Sigmoid colon (tissue), 7 donors: ENCODE measurements at regions of chr16 and their contacts with region 1.

Region 1: GRCh38 chr16:55944377-55944802 is 69.2 kb upstream of the CES5A start:
- DNase-seq: peak; percentile 91
- H3K4me3 ChIP-seq: no peak overlapping the region
- H3K27ac ChIP-seq: peak overlapping the region in 2 of 4 donors; percentile 4 to 63
- H3K4me1 ChIP-seq: peaks cover 0 to 14% (median 4%) of the 10 kb centered on the region in 4 donors
- H3K27me3 ChIP-seq: no peaks in the 10 kb centered on the region
- CTCF ChIP-seq: peak; percentile 79 to 93 (median 86)
- EP300 ChIP-seq: no peak
- POLR2A ChIP-seq: no peak

Region 2: DNA sequence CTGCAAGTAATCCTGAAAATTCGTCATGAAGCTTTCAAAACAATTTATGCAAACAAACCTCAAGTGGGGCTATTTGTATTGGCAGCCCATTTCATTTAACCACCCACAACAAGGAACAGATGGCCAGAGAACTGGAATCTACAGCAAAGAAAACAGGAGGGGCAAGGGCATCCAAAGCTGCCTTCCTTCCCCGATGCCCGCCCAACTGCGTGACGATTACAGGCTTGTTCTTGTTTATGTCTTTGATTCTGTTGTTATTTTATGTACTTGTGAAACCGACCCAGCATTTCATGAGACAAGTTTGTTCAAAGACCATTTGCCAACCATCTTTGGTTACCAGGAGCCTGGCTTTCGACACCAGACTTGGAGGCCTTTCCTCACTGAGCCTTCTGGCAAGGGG is 679.4 kb before region 1 on chr16:
- intact Hi-C with region 1: no loop called
- DNase-seq: no peak
- H3K4me3 ChIP-seq: no peak overlapping the region
- H3K27ac ChIP-seq: no peak overlapping the region
- H3K4me1 ChIP-seq: no peaks in the 10 kb centered on the region
- H3K27me3 ChIP-seq: no peaks in the 10 kb centered on the region
- CTCF ChIP-seq: no peak
- EP300 ChIP-seq: no peak
- POLR2A ChIP-seq: no peak

Region 3: GRCh38 chr16:56317998-56318826 is 373.8 kb after region 1 on chr16:
- intact Hi-C with region 1: loop called (anchors 1 kb)
- DNase-seq: peak; percentile 92
- H3K4me3 ChIP-seq: peak overlapping the region; percentile 15 to 40 (median 32)
- H3K27ac ChIP-seq: peak overlapping the region in 3 of 4 donors; percentile 47 to 60 (median 47)
- H3K4me1 ChIP-seq: peaks cover 0 to 16% (median 8%) of the 10 kb centered on the region in 4 donors
- H3K27me3 ChIP-seq: no peaks in the 10 kb centered on the region
- CTCF ChIP-seq: peak; percentile 91 to 96 (median 94)
- EP300 ChIP-seq: no peak
- POLR2A ChIP-seq: no peak

Region 4: DNA sequence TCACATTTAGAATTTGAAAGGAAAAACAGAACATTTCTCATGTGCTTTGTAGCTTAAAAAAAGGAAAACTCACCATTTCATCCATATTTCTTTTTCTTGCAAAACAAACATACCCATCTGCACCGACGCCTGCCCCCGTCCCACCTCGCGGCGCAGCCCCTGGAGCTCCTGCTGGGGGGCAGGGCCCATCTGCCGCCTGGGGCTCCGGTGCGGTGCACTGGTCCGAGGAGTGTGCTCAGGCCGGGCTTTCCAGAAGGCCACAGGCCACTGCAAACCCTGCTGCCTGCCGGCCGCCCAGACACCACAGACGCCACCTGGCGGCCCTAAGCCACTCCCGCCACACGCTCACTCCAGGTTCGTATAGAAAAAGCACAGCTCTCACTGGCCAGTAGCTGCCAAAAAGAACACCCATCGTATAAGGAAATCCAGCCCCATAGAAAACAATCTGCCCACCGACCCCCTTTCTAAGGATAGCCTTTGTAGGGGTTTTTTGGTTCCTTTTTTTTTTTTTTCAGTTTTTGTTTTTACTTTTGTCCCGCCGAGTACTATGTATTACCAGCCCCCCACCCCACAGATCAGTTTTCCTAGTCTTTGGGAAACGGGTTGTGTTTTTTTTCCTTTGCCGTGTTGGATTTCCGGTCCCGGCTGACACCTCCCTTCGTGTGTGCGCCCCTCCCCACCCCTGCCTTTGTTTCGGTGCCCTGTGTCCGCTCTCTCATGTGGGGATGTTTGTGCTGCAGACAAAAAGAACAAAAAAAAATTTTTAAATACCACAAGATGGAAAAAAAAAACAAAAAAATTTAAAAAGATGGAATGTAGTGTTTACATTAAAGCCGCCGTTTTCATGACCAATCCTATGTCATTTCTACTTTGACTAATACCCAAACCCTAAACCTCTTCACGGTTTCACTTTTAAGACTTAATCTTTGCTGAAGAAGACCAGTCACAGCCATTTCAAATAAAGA is 412.2 kb after region 1 on chr16:
- intact Hi-C with region 1: loop called (anchors 2 kb)
- DNase-seq: peak; percentile 91
- H3K4me3 ChIP-seq: peak overlapping the region; percentile 31 to 54 (median 49)
- H3K27ac ChIP-seq: peak overlapping the region; percentile 62 to 75 (median 71)
- H3K4me1 ChIP-seq: peaks cover 0 to 21% (median 15%) of the 10 kb centered on the region in 4 donors
- H3K27me3 ChIP-seq: no peaks in the 10 kb centered on the region
- CTCF ChIP-seq: peak; percentile 59 to 87 (median 80)
- EP300 ChIP-seq: no peak
- POLR2A ChIP-seq: no peak

Region 5: DNA sequence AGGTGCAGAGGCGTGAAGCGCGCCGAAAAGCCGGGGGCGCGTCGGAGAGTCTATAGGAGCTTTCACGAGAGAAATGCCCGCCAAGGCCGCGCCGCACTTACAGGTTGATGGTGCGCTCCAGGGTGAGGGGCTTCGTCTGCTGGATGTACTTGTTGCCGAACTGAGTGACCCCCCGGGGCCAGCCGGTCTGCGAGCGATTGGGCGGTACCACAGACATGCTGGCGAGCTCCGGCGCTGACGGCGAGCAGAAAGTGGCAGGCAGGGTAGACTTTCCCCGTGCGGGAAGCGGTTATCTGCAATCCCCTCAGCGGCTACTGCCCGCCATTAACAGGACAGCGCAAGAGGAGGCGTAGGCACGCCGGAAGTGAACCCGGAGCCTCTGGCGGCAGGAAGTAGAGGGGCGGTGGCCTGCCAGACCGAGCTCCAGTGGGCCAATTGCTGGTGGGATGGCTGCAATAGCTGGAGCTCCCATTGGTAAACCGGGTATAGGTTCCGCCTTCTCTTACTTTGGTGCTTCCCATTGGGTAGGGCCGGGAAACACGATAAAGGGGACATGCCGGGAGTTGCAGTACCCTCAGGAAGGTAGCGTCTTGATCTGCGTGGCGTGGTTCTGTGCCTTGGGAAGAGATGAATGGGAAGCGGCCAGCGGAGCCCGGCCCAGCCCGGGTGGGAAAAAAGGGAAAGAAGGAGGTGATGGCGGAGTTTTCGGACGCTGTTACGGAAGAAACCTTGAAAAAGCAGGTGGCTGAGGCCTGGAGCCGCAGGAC is 506.8 kb after region 1 on chr16 and contains the starts of genes NUDT21 and OGFOD1:
- intact Hi-C with region 1: loop called (anchors 10 kb)
- DNase-seq: peak; percentile 98
- H3K4me3 ChIP-seq: peak within 1 kb of the TSS; percentile 70 to 98 (median 88)
- H3K27ac ChIP-seq: peak within 1 kb of the TSS; percentile 79 to 88 (median 84)
- H3K4me1 ChIP-seq: peaks cover 0 to 43% (median 38%) of the 10 kb centered on the region in 4 donors
- H3K27me3 ChIP-seq: no peaks in the 10 kb centered on the region
- CTCF ChIP-seq: peak in 1 of 4 experiments; percentile 10
- EP300 ChIP-seq: no peak
- POLR2A ChIP-seq: peak; percentile 27 to 51
- total RNA-seq, gene NUDT21: 40.4 to 51.7 (median 45.5) TPM
- total RNA-seq, gene OGFOD1: 13.6 to 34.1 (median 19.7) TPM